ENCODE measurements at regions of chr11 and their contacts with region 1.

Region 1: GRCh38 chr11:117621226-117621625 is 175.8 kb downstream of the DSCAML1 start:
- DNase-seq: peak; percentile 12
- H3K4me3 Mint-ChIP-seq: no peak overlapping the region
- H3K27ac Mint-ChIP-seq: no peak overlapping the region
- H3K4me1 Mint-ChIP-seq: no peaks in the 10 kb centered on the region
- H3K27me3 Mint-ChIP-seq: peaks cover 11% of the 10 kb centered on the region

Region 2: DNA sequence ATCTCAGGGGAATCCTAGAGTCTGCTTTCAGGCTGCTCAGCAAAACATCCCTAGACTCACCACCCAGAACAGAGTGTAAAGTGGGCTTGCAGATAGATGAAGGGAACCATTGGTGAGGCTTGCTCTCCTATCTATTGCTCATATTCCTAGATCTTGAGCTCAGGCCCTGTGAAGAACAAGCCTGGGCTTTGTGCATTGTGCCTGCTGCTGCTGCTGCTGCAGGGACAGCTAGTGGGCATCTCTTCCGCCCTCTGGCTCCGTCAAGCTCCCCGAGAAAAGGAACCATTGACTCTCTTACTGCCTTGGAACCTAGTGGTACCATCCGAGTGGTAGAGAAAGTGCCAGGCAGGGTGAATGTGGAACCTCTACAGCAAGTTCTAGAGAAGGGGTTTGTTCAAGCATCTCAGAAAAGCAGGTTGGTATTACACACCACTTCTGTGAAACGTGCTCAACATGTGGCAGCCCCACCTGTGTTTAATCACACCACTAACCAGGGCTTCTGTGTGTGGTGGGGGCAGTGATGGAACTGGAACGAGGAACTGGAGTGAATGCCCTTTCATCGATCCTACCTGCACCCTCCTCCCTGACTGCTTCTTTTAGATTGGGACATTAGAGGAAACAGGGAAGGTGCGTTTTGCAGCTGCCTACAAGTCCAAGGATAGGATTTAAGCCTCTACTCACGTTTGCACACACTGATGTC is 325.6 kb before region 1 on chr11:
- CTCF ChIA-PET with region 1: no interaction called
- POLR2A ChIA-PET with region 1: no interaction called
- DNase-seq: no peak
- H3K4me3 Mint-ChIP-seq: no peak overlapping the region
- H3K27ac Mint-ChIP-seq: no peak overlapping the region
- H3K4me1 Mint-ChIP-seq: no peaks in the 10 kb centered on the region
- H3K27me3 Mint-ChIP-seq: no peaks in the 10 kb centered on the region

Region 3: GRCh38 chr11:117610045-117610444 is 11.2 kb before region 1 on chr11:
- CTCF ChIA-PET with region 1: interaction called, 11 read pairs
- POLR2A ChIA-PET with region 1: no interaction called
- DNase-seq: no peak
- H3K4me3 Mint-ChIP-seq: no peak overlapping the region
- H3K27ac Mint-ChIP-seq: no peak overlapping the region
- H3K4me1 Mint-ChIP-seq: peaks cover 18% of the 10 kb centered on the region
- H3K27me3 Mint-ChIP-seq: no peaks in the 10 kb centered on the region

Region 4: DNA sequence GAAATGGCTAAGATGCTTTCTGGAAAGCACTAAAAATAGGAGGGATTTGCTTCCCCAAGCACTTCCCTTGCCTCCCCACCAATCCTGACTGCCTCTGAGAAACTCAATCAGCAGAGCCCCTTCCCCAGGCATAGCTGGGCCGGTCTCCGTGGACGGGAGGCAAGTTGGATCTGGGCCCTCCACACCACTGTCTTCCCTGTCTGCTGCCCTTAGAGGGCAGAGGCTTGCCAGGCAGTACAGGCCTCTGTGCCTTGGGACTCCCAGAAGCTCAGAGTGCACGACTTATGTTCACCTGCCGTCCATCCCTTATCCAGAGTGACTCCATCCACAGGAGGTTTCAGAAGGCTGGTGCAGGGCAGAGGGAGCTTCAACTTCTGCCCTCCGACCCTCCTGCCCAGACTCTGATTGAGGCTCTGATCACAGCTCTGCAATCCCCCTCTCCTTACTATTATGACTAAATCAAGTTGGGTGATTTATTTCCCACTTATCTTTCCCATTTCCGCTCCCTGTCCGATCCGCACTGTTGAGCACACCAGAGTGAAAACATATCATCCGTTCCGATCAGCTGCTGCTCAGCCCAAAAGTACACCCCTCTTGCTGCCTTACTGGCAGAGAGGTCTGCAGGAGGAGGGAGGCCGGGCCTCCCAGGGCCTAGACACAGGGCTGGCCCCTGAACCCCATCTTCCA is 104.0 kb after region 1 on chr11:
- CTCF ChIA-PET with region 1: no interaction called
- POLR2A ChIA-PET with region 1: no interaction called
- DNase-seq: no peak
- H3K4me3 Mint-ChIP-seq: no peak overlapping the region
- H3K27ac Mint-ChIP-seq: no peak overlapping the region
- H3K4me1 Mint-ChIP-seq: no peaks in the 10 kb centered on the region
- H3K27me3 Mint-ChIP-seq: peaks cover 7% of the 10 kb centered on the region

Region 5: DNA sequence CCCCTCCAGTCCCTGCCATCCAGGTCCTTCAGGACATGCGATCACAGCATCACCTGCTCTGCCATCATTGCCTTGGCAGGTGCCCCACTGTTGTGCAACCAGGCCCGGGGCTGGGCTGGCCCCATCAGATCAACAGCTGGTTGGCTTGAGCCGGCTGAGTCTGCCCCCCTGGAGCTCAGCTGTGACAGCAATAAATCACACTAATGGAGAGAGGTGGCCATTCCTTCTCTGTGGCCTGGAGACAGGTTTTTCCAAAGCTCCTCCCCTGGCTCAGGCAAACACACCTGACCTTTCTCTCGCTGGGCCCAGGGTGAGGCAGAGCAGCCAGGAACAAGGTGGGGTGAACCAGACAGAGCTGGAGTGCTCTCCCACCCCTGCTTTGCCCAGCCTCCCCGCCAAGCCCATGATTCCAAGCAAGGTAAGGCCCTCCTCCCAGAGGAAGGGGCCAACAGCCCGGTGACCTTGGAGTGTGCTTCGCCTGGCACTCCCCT is 212.2 kb after region 1 on chr11:
- CTCF ChIA-PET with region 1: no interaction called
- POLR2A ChIA-PET with region 1: no interaction called
- DNase-seq: no peak
- H3K4me3 Mint-ChIP-seq: no peak overlapping the region
- H3K27ac Mint-ChIP-seq: no peak overlapping the region
- H3K4me1 Mint-ChIP-seq: peaks cover 32% of the 10 kb centered on the region
- H3K27me3 Mint-ChIP-seq: peaks cover 9% of the 10 kb centered on the region